B cell (primary cell): ENCODE measurements at regions of chr11 and their contacts with region 1.

Region 1: GRCh38 chr11:64269380-64270234 is 14.9 kb downstream of the BAD start:
- DNase-seq: peak; percentile 99
- ATAC-seq: peak; percentile 73
- H3K4me3 ChIP-seq: peak overlapping the region; percentile 79 to 96 (median 87)
- H3K4me3 Mint-ChIP-seq: peak overlapping the region; percentile 100
- H3K27ac ChIP-seq: peak overlapping the region; percentile 89 to 91
- H3K27ac Mint-ChIP-seq: peak overlapping the region; percentile 99
- H3K4me1 ChIP-seq: peaks cover 14 to 29% of the 10 kb centered on the region in 2 donors
- H3K4me1 Mint-ChIP-seq: peaks cover 19% of the 10 kb centered on the region
- H3K27me3 ChIP-seq: no peaks in the 10 kb centered on the region
- H3K27me3 Mint-ChIP-seq: no peaks in the 10 kb centered on the region
- CTCF ChIP-seq: peak; percentile 37

Region 2: DNA sequence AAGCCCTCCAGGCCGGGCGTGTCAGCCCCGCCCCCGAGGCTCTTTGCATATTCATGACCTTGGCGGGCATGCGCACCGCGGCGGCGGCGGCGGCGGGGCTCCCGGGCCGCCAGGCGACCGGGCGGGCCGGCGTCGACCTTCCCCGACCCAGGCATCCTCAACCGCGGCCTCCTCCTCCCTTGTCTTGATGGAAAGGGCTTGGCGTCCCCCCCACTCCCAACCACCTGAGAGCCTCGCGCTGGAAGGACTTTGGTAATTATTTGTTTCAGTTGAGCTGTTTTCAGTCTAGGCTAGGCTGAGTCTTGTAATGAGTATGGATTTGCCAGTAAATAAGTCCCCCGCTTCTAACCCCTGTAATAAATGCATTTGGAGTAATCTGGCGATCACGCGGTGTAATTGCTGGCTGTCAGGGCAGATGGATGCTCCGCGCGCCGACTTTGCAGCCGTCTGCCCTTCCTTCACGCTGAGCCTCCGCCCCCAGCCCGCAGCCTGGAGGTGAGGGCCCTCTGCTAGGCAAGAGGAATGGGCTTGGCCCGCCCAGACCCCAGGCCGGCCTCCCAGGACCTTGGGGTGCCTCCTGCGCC is 208.7 kb before region 1 on chr11:
- CTCF ChIA-PET with region 1: no interaction called
- POLR2A ChIA-PET with region 1: no interaction called
- intact Hi-C with region 1: no loop called
- DNase-seq: peak; percentile 78
- ATAC-seq: peak; percentile 75
- H3K4me3 ChIP-seq: peak overlapping the region; percentile 35 to 65 (median 55)
- H3K4me3 Mint-ChIP-seq: peak overlapping the region; percentile 84
- H3K27ac ChIP-seq: no peak overlapping the region
- H3K27ac Mint-ChIP-seq: no peak overlapping the region
- H3K4me1 ChIP-seq: peaks cover 13 to 14% of the 10 kb centered on the region in 2 donors
- H3K4me1 Mint-ChIP-seq: peaks cover 11% of the 10 kb centered on the region
- H3K27me3 ChIP-seq: peaks cover 0 to 28% (median 11%) of the 10 kb centered on the region in 4 experiments
- H3K27me3 Mint-ChIP-seq: peaks cover 17% of the 10 kb centered on the region
- CTCF ChIP-seq: no peak

Region 3: GRCh38 chr11:64225612-64226506 is 43.7 kb before region 1 on chr11 and contains the starts of genes NUDT22 and TRPT1:
- CTCF ChIA-PET with region 1: interaction called, 4 read pairs
- POLR2A ChIA-PET with region 1: interaction called, 8 read pairs
- intact Hi-C with region 1: loop called (anchors 1 kb)
- DNase-seq: peak; percentile 91
- ATAC-seq: peak; percentile 53
- H3K4me3 ChIP-seq: peak within 1 kb of the TSS; percentile 64 to 97 (median 92)
- H3K4me3 Mint-ChIP-seq: peak within 1 kb of the TSS; percentile 91
- H3K27ac ChIP-seq: peak within 1 kb of the TSS; percentile 82 to 86
- H3K27ac Mint-ChIP-seq: peak within 1 kb of the TSS; percentile 93
- H3K4me1 ChIP-seq: peaks cover 26 to 41% of the 10 kb centered on the region in 2 donors
- H3K4me1 Mint-ChIP-seq: peaks cover 43% of the 10 kb centered on the region
- H3K27me3 ChIP-seq: no peaks in the 10 kb centered on the region
- H3K27me3 Mint-ChIP-seq: no peaks in the 10 kb centered on the region
- CTCF ChIP-seq: peak; percentile 63
- total RNA-seq, gene NUDT22: 97.2 and 104 TPM in 2 replicates
- total RNA-seq, gene TRPT1: 59.6 and 62.0 TPM in 2 replicates

Region 4: GRCh38 chr11:64240394-64241174 is 29.0 kb before region 1 on chr11 and contains the start of gene FKBP2:
- CTCF ChIA-PET with region 1: interaction called, 11 read pairs
- POLR2A ChIA-PET with region 1: interaction called, 37 read pairs
- intact Hi-C with region 1: loop called (anchors 1 kb)
- DNase-seq: peak; percentile 99
- ATAC-seq: peak; percentile 58
- H3K4me3 ChIP-seq: peak within 1 kb of the TSS in 4 of 5 experiments; percentile 76 to 91 (median 83)
- H3K4me3 Mint-ChIP-seq: peak within 1 kb of the TSS; percentile 91
- H3K27ac ChIP-seq: peak within 1 kb of the TSS; percentile 98
- H3K27ac Mint-ChIP-seq: peak within 1 kb of the TSS; percentile 97
- H3K4me1 ChIP-seq: peaks cover 31 to 63% of the 10 kb centered on the region in 2 donors
- H3K4me1 Mint-ChIP-seq: peaks cover 62% of the 10 kb centered on the region
- H3K27me3 ChIP-seq: no peaks in the 10 kb centered on the region
- H3K27me3 Mint-ChIP-seq: no peaks in the 10 kb centered on the region
- CTCF ChIP-seq: no peak
- total RNA-seq, gene FKBP2: 23.7 and 25.7 TPM in 2 replicates

Region 5: GRCh38 chr11:64246871-64247728 is 22.5 kb before region 1 on chr11 and contains the start of gene PPP1R14B:
- CTCF ChIA-PET with region 1: interaction called, 51 read pairs
- POLR2A ChIA-PET with region 1: interaction called, 37 read pairs
- intact Hi-C with region 1: loop called (anchors 1 kb)
- DNase-seq: peak; percentile 85
- ATAC-seq: peak; percentile 60
- H3K4me3 ChIP-seq: peak within 1 kb of the TSS; percentile 78 to 99 (median 88)
- H3K4me3 Mint-ChIP-seq: peak within 1 kb of the TSS; percentile 90
- H3K27ac ChIP-seq: peak within 1 kb of the TSS; percentile 53 to 79
- H3K27ac Mint-ChIP-seq: peak within 1 kb of the TSS; percentile 91
- H3K4me1 ChIP-seq: peaks cover 26 to 54% of the 10 kb centered on the region in 2 donors
- H3K4me1 Mint-ChIP-seq: peaks cover 40% of the 10 kb centered on the region
- H3K27me3 ChIP-seq: no peaks in the 10 kb centered on the region
- H3K27me3 Mint-ChIP-seq: no peaks in the 10 kb centered on the region
- CTCF ChIP-seq: no peak
- total RNA-seq, gene PPP1R14B: 39.2 and 41.2 TPM in 2 replicates

Region 6: GRCh38 chr11:64284048-64284961 is 14.7 kb after region 1 on chr11 and contains the start of gene BAD:
- CTCF ChIA-PET with region 1: interaction called, 33 read pairs
- POLR2A ChIA-PET with region 1: interaction called, 67 read pairs
- intact Hi-C with region 1: loop called (anchors 1 kb)
- DNase-seq: peak; percentile 96
- ATAC-seq: peak; percentile 77
- H3K4me3 ChIP-seq: peak within 1 kb of the TSS; percentile 61 to 97 (median 90)
- H3K4me3 Mint-ChIP-seq: peak within 1 kb of the TSS; percentile 90
- H3K27ac ChIP-seq: peak within 1 kb of the TSS; percentile 100
- H3K27ac Mint-ChIP-seq: peak within 1 kb of the TSS; percentile 96
- H3K4me1 ChIP-seq: peaks cover 13 to 18% of the 10 kb centered on the region in 2 donors
- H3K4me1 Mint-ChIP-seq: peaks cover 20% of the 10 kb centered on the region
- H3K27me3 ChIP-seq: no peaks in the 10 kb centered on the region
- H3K27me3 Mint-ChIP-seq: no peaks in the 10 kb centered on the region
- CTCF ChIP-seq: no peak
- total RNA-seq, gene BAD: 24.0 and 25.0 TPM in 2 replicates

Region 7: DNA sequence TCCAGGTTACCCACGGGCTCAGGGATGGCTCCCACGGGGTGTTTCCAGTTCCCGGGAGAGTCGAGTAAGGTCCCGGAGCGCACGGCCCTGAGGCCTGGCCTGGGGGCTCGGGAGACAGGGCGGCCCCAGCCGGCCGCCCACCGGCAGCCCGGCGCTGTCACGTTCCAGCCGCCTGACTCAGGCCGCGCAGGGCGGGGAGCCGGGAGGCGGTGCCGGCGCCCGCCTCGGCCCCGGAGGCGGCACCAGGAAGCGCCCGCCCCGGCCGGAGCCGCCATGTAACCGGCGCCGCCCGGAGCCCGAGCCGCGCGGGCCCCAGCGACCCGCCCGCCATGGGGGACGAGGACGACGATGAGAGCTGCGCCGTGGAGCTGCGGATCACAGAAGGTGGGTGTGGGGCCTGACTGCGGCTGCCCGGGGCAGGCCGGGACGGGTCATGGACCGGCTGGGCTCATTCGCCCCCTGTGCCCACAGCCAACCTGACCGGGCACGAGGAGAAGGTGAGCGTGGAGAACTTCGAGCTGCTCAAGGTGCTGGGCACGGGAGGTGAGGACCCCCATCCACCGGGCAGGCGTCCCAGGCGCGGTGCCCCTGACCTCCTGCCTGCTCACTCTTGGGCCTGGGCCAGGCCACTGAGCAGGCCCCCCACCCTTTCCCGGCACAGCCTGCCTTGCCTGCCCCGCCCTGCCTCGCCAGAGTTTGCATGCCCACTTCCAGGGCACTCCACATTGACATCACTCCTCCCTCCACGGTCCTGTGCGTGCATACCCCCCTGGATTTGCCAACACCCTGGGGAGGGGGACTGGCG is 89.5 kb after region 1 on chr11 and contains the start of gene RPS6KA4:
- CTCF ChIA-PET with region 1: interaction called, 14 read pairs
- POLR2A ChIA-PET with region 1: interaction called, 6 read pairs
- intact Hi-C with region 1: no loop called
- DNase-seq: peak; percentile 68
- ATAC-seq: peak; percentile 72
- H3K4me3 ChIP-seq: peak within 1 kb of the TSS; percentile 26 to 86 (median 75)
- H3K4me3 Mint-ChIP-seq: peak within 1 kb of the TSS; percentile 94
- H3K27ac ChIP-seq: peak within 1 kb of the TSS; percentile 12 to 46
- H3K27ac Mint-ChIP-seq: peak within 1 kb of the TSS; percentile 81
- H3K4me1 ChIP-seq: peaks cover 27 to 51% of the 10 kb centered on the region in 2 donors
- H3K4me1 Mint-ChIP-seq: peaks cover 43% of the 10 kb centered on the region
- H3K27me3 ChIP-seq: no peaks in the 10 kb centered on the region
- H3K27me3 Mint-ChIP-seq: no peaks in the 10 kb centered on the region
- CTCF ChIP-seq: no peak
- total RNA-seq, gene RPS6KA4: 22.6 and 24.2 TPM in 2 replicates